Activated B cell treated with CpG ODN at 0.5 μM for 24 hours (primary cell): ENCODE measurements at regions of chr2 and their contacts with region 1.

Region 1: GRCh38 chr2:129936334-129936934 is 43.0 kb upstream of the RAB6C start:
- DNase-seq: peak; percentile 55
- ATAC-seq: peak; percentile 70
- H3K4me3 Mint-ChIP-seq: no peak overlapping the region
- H3K27ac Mint-ChIP-seq: no peak overlapping the region
- H3K4me1 Mint-ChIP-seq: no peaks in the 10 kb centered on the region
- H3K27me3 Mint-ChIP-seq: peaks cover 36% of the 10 kb centered on the region
- CTCF ChIP-seq: peak; percentile 53

Region 2: DNA sequence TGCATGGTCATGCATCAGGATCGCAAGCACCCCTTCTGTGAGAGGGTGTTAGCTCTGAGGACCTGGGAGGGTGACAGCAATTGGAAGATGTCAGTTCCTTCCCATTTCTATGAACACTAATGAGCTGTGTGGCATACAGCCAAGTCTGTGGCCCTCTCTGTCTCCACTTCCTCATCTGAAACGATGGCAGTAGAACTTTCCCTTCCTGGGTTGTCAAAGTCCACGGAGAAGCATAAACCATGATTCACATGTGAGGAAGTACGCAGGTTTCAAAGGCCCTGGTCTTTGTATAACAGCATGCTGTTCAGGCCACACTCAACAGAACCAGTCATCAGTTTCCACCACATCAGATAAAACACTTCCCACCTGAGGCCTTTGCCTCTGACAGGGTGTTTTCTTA is 124.4 kb before region 1 on chr2:
- CTCF ChIA-PET with region 1: no interaction called
- POLR2A ChIA-PET with region 1: no interaction called
- intact Hi-C with region 1: no loop called
- DNase-seq: no peak
- ATAC-seq: peak; percentile 31
- H3K4me3 Mint-ChIP-seq: no peak overlapping the region
- H3K27ac Mint-ChIP-seq: no peak overlapping the region
- H3K4me1 Mint-ChIP-seq: peaks cover 15% of the 10 kb centered on the region
- H3K27me3 Mint-ChIP-seq: peaks cover 10% of the 10 kb centered on the region
- CTCF ChIP-seq: no peak

Region 3: GRCh38 chr2:130158631-130159030 is 222.2 kb after region 1 on chr2:
- CTCF ChIA-PET with region 1: interaction called, 8 read pairs
- POLR2A ChIA-PET with region 1: no interaction called
- intact Hi-C with region 1: loop called (anchors 1 kb)
- DNase-seq: no peak
- ATAC-seq: no peak
- H3K4me3 Mint-ChIP-seq: no peak overlapping the region
- H3K27ac Mint-ChIP-seq: peak overlapping the region; percentile 90
- H3K4me1 Mint-ChIP-seq: peaks cover 33% of the 10 kb centered on the region
- H3K27me3 Mint-ChIP-seq: no peaks in the 10 kb centered on the region
- CTCF ChIP-seq: no peak

Region 4: DNA sequence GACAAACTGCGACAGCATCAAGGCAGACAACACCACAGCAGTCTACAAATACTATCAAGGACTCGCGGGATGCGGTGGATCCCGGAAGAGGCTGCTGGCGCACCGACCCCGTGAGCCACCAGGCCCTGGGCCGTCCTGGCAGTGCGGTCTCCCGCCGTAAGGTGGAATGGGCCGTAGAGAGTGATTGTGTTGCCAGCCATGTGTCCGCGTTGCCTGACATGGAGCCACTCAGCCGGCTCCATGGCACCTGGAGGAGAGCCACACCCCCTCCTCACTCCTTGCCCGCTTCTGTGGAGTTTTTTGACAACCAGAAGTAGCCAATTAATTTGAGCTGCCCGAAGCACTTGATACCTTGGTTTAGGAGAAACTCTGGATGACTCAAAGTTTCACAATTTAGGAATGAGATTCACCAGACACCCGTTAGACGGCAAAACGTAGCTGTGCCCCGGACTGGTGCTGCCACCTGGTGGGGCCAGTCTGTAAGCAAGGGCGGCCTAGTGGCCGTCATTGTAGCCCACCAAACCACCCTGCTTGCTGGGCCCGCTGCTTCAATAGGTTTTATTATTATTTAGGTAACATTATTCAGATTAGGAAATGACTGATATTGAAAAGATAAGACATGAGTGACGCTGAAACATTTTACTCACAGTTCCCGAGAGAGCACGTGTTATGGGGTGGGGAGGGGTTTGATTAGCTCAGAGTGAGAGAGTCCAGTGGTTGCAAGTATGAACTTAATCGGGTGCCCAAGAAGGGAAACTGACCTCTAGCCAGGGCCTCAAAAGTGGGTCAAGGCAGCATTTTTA is 396.0 kb after region 1 on chr2:
- CTCF ChIA-PET with region 1: interaction called, 36 read pairs
- POLR2A ChIA-PET with region 1: no interaction called
- intact Hi-C with region 1: no loop called
- DNase-seq: peak; percentile 65
- ATAC-seq: peak; percentile 91
- H3K4me3 Mint-ChIP-seq: peak overlapping the region; percentile 36
- H3K27ac Mint-ChIP-seq: no peak overlapping the region
- H3K4me1 Mint-ChIP-seq: peaks cover 4% of the 10 kb centered on the region
- H3K27me3 Mint-ChIP-seq: peaks cover 20% of the 10 kb centered on the region
- CTCF ChIP-seq: peak; percentile 94